Endothelial cell of umbilical vein (primary cell): ENCODE measurements at regions of chr1 and their contacts with region 1.

Region 1: DNA sequence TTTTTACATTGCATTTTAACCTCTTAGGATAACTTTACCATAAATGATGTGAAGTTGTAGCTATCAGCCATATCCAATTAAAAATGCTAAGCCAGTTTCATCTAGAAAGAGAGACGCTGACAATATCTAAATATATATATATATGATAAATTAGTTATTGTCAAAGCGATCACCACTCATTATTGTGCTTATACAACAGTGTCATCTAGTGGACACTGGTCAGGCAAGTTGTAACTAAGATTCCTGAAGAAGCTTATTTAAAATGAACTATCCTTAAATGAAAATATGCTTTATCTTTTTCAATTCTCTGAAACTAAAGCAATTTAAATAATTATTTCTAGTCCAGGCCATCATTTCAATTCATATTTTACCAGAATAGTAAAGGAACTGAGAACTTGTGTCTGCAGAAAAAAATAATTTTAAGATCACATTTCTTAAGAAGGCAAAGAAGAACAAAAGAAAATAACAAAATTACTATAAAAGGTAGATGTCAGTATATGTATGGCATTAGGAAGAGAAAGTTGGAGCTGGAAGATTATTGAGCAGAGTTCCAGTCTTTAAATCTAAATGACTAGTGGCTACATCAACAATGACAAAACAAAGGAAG is 193.3 kb upstream of the SNX7 start:
- DNase-seq: peak; percentile 84
- H3K4me3 ChIP-seq: no peak overlapping the region
- H3K27ac ChIP-seq: peak overlapping the region; percentile 47
- H3K4me1 ChIP-seq: peaks cover 7% of the 10 kb centered on the region
- H3K27me3 ChIP-seq: no peaks in the 10 kb centered on the region
- CTCF ChIP-seq: peak; percentile 48 to 62
- POLR2A ChIP-seq: no peak

Region 2: GRCh38 chr1:97137862-97138514 is 1330.2 kb before region 1 on chr1:
- CTCF ChIA-PET with region 1: interaction called, 13 read pairs
- POLR2A ChIA-PET with region 1: no interaction called
- dilution Hi-C with region 1: no loop called
- intact Hi-C with region 1: no loop called
- DNase-seq: peak; percentile 95
- H3K4me3 ChIP-seq: no peak overlapping the region
- H3K27ac ChIP-seq: peak overlapping the region; percentile 27
- H3K4me1 ChIP-seq: peaks cover 10% of the 10 kb centered on the region
- H3K27me3 ChIP-seq: no peaks in the 10 kb centered on the region
- CTCF ChIP-seq: peak; percentile 52 to 65
- POLR2A ChIP-seq: no peak

Region 3: DNA sequence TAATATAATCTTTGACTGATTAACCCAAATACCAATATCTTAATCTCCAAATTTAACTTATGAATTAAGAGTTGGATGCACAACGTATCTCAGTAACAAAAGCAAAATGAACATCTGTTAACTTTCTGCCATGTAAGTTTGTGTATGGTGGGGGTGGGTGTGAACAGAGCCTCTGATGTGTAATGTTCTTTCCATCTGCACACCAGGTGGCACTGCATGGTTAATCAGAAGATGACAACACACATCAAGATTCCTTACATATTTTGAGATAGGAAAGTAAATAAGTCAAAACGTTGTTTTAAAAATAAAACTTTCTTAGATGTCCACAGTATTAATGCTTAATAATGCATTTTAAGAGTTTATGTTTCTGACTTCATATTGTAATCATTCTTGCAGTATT is 799.3 kb before region 1 on chr1:
- CTCF ChIA-PET with region 1: interaction called, 11 read pairs
- POLR2A ChIA-PET with region 1: no interaction called
- dilution Hi-C with region 1: no loop called
- intact Hi-C with region 1: loop called (anchors 5 kb)
- DNase-seq: peak; percentile 66
- H3K4me3 ChIP-seq: no peak overlapping the region
- H3K27ac ChIP-seq: no peak overlapping the region
- H3K4me1 ChIP-seq: no peaks in the 10 kb centered on the region
- H3K27me3 ChIP-seq: no peaks in the 10 kb centered on the region
- CTCF ChIP-seq: peak; percentile 23
- POLR2A ChIP-seq: no peak

Region 4: GRCh38 chr1:97989094-97989680 is 479.0 kb before region 1 on chr1:
- CTCF ChIA-PET with region 1: interaction called, 12 read pairs
- POLR2A ChIA-PET with region 1: no interaction called
- dilution Hi-C with region 1: no loop called
- intact Hi-C with region 1: no loop called
- DNase-seq: no peak
- H3K4me3 ChIP-seq: no peak overlapping the region
- H3K27ac ChIP-seq: no peak overlapping the region
- H3K4me1 ChIP-seq: peaks cover 17% of the 10 kb centered on the region
- H3K27me3 ChIP-seq: no peaks in the 10 kb centered on the region
- CTCF ChIP-seq: no peak
- POLR2A ChIP-seq: no peak

Region 5: GRCh38 chr1:98053471-98054366 is 414.5 kb before region 1 on chr1:
- CTCF ChIA-PET with region 1: interaction called, 126 read pairs
- POLR2A ChIA-PET with region 1: interaction called, 6 read pairs
- dilution Hi-C with region 1: no loop called
- intact Hi-C with region 1: loop called (anchors 1 kb)
- DNase-seq: peak; percentile 85
- H3K4me3 ChIP-seq: peak overlapping the region in 2 of 3 experiments; percentile 34 to 35
- H3K27ac ChIP-seq: peak overlapping the region; percentile 89
- H3K4me1 ChIP-seq: peaks cover 35% of the 10 kb centered on the region
- H3K27me3 ChIP-seq: no peaks in the 10 kb centered on the region
- CTCF ChIP-seq: peak; percentile 68 to 97
- POLR2A ChIP-seq: no peak

Region 6: GRCh38 chr1:98221923-98222322 is 246.3 kb before region 1 on chr1:
- CTCF ChIA-PET with region 1: interaction called, 10 read pairs
- POLR2A ChIA-PET with region 1: no interaction called
- dilution Hi-C with region 1: no loop called
- intact Hi-C with region 1: no loop called
- DNase-seq: peak; percentile 76
- H3K4me3 ChIP-seq: no peak overlapping the region
- H3K27ac ChIP-seq: no peak overlapping the region
- H3K4me1 ChIP-seq: peaks cover 18% of the 10 kb centered on the region
- H3K27me3 ChIP-seq: no peaks in the 10 kb centered on the region
- CTCF ChIP-seq: no peak
- POLR2A ChIP-seq: no peak

Region 7: GRCh38 chr1:98277118-98277517 is 191.1 kb before region 1 on chr1:
- CTCF ChIA-PET with region 1: no interaction called
- POLR2A ChIA-PET with region 1: no interaction called
- dilution Hi-C with region 1: no loop called
- intact Hi-C with region 1: no loop called
- DNase-seq: peak; percentile 20
- H3K4me3 ChIP-seq: no peak overlapping the region
- H3K27ac ChIP-seq: no peak overlapping the region
- H3K4me1 ChIP-seq: no peaks in the 10 kb centered on the region
- H3K27me3 ChIP-seq: no peaks in the 10 kb centered on the region
- CTCF ChIP-seq: no peak
- POLR2A ChIP-seq: no peak

Region 8: GRCh38 chr1:98323906-98324358 is 144.3 kb before region 1 on chr1:
- CTCF ChIA-PET with region 1: interaction called, 20 read pairs
- POLR2A ChIA-PET with region 1: interaction called, 3 read pairs
- dilution Hi-C with region 1: no loop called
- intact Hi-C with region 1: loop called (anchors 1 kb)
- DNase-seq: peak; percentile 86
- H3K4me3 ChIP-seq: peak overlapping the region in 1 of 3 experiments; percentile 26
- H3K27ac ChIP-seq: peak overlapping the region; percentile 97
- H3K4me1 ChIP-seq: peaks cover 72% of the 10 kb centered on the region
- H3K27me3 ChIP-seq: no peaks in the 10 kb centered on the region
- CTCF ChIP-seq: no peak
- POLR2A ChIP-seq: peak; percentile 80